MCF 10A (cell line): ENCODE measurements at regions of chr17 and their contacts with region 1.

Region 1: DNA sequence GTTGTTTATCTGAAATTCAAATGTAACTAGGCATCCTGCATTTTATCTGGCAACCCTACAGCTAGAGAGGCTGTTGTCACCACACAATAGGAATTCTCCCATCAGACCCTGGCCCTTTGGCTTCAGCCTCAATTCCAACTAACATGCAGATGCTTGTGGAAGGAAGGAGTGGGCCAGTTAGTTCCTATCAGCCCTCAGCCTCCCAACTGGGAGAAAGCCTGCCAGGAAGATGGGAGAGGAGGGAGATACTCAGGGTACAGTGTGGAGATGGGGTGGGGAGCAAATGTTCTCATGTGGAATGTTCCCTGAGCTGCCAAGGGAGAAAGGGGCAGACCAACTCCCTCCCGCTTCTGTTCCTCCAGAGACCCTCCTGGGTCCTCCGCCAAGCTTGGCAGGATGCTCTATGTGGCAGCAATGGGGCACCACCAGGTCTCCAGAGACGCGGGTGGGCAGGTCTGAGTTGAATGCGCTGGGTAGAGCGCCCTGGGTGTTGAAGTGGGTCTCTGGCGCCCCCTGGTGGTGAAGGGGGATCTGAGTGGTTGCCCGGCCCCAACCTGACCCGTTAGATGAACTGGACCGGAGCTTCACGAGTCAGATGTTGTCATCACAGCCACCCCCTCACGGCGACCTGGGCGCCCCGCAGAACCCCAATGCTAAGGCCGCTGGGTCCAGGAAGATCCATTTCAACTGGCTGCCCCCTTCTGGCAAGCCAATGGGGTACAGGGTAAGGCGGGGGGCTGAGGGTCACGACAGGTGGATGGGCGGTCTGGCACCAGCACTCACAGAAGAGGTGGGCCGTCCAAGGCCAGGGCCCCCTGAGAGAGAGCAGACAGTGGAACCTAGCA is 15.2 kb downstream of the GALK1 start:
- DNase-seq: peak; percentile 68
- H3K4me3 Mint-ChIP-seq: no peak overlapping the region
- H3K27ac Mint-ChIP-seq: no peak overlapping the region
- H3K4me1 Mint-ChIP-seq: peaks cover 9% of the 10 kb centered on the region
- H3K27me3 Mint-ChIP-seq: no peaks in the 10 kb centered on the region
- CTCF ChIP-seq: peak; percentile 84

Region 2: GRCh38 chr17:75632863-75633485 is 116.8 kb before region 1 on chr17 and contains the start of gene SMIM5:
- CTCF ChIA-PET with region 1: interaction called, 25 read pairs
- POLR2A ChIA-PET with region 1: interaction called, 3 read pairs
- intact Hi-C with region 1: loop called (anchors 1 kb)
- DNase-seq: peak; percentile 78
- H3K4me3 Mint-ChIP-seq: peak within 1 kb of the TSS; percentile 19
- H3K27ac Mint-ChIP-seq: peak within 1 kb of the TSS; percentile 55
- H3K4me1 Mint-ChIP-seq: peaks cover 10% of the 10 kb centered on the region
- H3K27me3 Mint-ChIP-seq: no peaks in the 10 kb centered on the region
- CTCF ChIP-seq: peak; percentile 90
- total RNA-seq, gene SMIM5: 0.09 TPM in 1 of 2 replicates, not detected in the other

Region 3: DNA sequence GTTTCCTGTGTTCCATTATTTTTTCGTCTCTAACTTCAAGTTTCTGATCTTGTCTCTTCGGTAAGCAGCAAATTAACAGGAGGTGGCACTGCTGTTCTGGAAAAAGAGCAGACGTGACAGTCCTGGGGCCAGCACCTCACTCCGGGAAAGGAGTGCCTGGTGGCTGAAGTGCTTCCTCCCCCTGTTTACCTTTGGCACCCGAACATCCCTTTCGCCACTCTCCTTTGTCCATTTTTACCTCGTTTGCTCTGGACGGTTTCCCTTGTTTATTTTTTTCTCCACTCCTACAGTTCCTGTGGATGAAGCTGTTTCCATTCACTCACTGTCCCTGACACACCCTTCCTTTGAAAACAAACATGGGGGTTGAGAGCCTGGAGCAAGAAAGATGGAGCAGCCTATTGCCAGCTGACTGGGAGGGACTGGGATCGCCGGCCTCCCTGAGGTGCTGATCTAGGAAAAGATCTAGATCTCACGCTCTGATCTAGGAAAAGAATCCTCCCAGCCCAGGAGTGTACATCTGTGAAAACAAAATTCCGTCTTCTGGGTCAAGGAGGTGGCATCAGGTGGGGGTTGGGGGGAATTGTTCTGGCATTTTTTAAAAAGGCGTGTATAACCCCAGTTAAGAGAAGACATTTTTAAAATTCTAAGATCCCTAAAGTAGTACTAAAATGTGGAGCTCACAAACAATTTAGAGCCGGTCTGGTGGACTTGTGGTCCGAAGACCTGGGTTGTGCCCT is 69.9 kb before region 1 on chr17:
- CTCF ChIA-PET with region 1: interaction called, 152 read pairs
- POLR2A ChIA-PET with region 1: interaction called, 109 read pairs
- intact Hi-C with region 1: loop called (anchors 1 kb)
- DNase-seq: peak; percentile 92
- H3K4me3 Mint-ChIP-seq: peak overlapping the region; percentile 60
- H3K27ac Mint-ChIP-seq: peak overlapping the region; percentile 91
- H3K4me1 Mint-ChIP-seq: peaks cover 40% of the 10 kb centered on the region
- H3K27me3 Mint-ChIP-seq: no peaks in the 10 kb centered on the region
- CTCF ChIP-seq: peak; percentile 60

Region 4: GRCh38 chr17:75720725-75721462 is 28.9 kb before region 1 on chr17 and contains the start of gene ITGB4:
- CTCF ChIA-PET with region 1: interaction called, 25 read pairs
- POLR2A ChIA-PET with region 1: interaction called, 25 read pairs
- intact Hi-C with region 1: no loop called
- DNase-seq: peak; percentile 85
- H3K4me3 Mint-ChIP-seq: peak within 1 kb of the TSS; percentile 87
- H3K27ac Mint-ChIP-seq: peak within 1 kb of the TSS; percentile 78
- H3K4me1 Mint-ChIP-seq: peaks cover 6% of the 10 kb centered on the region
- H3K27me3 Mint-ChIP-seq: no peaks in the 10 kb centered on the region
- CTCF ChIP-seq: no peak
- total RNA-seq, gene ITGB4: 727 and 1,054 TPM in 2 replicates

Region 5: DNA sequence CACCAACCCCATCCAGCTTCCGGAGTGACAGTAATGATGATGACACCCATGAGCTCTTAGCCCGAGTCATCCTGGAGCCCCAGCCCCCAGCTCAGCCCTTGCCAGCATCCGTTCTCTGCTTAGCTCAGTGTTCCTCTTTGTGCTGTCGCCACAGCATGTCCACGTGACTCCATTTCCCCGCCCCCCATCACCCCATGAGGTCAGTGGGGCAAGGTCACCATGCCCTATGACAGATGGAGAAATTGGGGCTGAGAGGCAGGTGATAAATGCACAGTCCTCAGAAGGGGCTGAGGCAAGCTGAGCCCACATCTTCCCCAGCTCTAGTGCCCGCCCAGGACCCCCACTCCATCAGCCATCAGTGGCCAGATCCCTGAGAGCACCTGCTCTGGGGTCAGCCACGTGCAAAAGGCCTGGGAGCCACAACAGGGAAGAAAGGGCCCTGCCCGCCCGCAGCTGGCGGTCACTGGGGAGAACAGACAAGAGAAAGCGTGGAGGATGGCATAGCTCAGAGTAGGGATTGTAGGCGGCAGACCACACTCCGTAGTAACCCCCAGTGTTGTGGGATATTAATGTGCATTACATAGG is 11.5 kb before region 1 on chr17:
- CTCF ChIA-PET with region 1: interaction called, 12 read pairs
- POLR2A ChIA-PET with region 1: interaction called, 10 read pairs
- intact Hi-C with region 1: no loop called
- DNase-seq: no peak
- H3K4me3 Mint-ChIP-seq: no peak overlapping the region
- H3K27ac Mint-ChIP-seq: no peak overlapping the region
- H3K4me1 Mint-ChIP-seq: peaks cover 4% of the 10 kb centered on the region
- H3K27me3 Mint-ChIP-seq: no peaks in the 10 kb centered on the region
- CTCF ChIP-seq: no peak

Region 6: DNA sequence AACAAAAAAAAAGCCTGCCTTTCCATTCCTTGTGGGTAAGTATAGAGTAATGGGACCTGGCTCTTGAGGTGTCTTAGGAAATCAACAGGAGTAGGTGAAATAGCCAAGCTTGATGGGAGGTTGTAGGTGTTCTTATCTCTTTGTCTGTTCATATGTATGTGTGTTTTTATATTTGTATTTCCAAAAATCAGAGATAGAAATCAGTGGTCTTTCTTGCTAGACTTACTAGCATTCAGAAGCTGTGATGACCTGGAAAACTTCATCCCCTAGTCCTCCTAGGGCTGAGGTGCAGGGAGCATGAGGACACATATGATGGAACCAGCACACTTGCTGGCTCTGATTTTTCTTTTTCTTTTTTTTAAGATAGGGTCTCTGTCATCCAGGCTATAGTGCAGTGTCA is 37.1 kb after region 1 on chr17:
- CTCF ChIA-PET with region 1: no interaction called
- POLR2A ChIA-PET with region 1: no interaction called
- intact Hi-C with region 1: no loop called
- DNase-seq: no peak
- H3K4me3 Mint-ChIP-seq: peak overlapping the region; percentile 8
- H3K27ac Mint-ChIP-seq: peak overlapping the region; percentile 96
- H3K4me1 Mint-ChIP-seq: peaks cover 15% of the 10 kb centered on the region
- H3K27me3 Mint-ChIP-seq: no peaks in the 10 kb centered on the region
- CTCF ChIP-seq: no peak